GM10248 (cell line): ENCODE measurements at regions of chr16 and their contacts with region 1.

Region 1: GRCh38 chr16:53743149-53743566 is 39.2 kb downstream of the FTO start:
- DNase-seq: no peak
- CTCF ChIP-seq: peak; percentile 54

Region 2: DNA sequence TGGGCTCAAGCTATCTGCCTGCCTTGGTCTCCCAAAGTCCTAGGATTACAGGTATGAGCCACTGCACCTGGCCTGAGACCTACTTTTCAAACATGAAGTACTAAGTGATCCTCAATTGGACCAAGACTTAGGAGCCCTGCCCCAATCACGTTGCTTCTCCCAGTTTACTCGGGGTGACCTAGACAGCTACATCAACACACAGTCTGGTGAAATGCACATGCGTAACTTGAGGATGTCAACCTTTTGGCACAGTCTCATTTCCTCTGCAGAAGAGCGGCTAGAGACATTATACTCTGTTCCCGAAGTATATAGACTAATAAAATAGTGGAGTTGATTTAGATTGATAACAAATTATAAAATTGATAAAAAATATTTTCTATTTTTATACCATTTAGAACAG is 22.1 kb before region 1 on chr16:
- CTCF ChIA-PET with region 1: interaction called, 25 read pairs
- POLR2A ChIA-PET with region 1: no interaction called
- DNase-seq: no peak
- CTCF ChIP-seq: no peak

Region 3: GRCh38 chr16:53730693-53731092 is 12.5 kb before region 1 on chr16:
- CTCF ChIA-PET with region 1: interaction called, 25 read pairs
- POLR2A ChIA-PET with region 1: no interaction called
- DNase-seq: no peak
- CTCF ChIP-seq: no peak

Region 4: DNA sequence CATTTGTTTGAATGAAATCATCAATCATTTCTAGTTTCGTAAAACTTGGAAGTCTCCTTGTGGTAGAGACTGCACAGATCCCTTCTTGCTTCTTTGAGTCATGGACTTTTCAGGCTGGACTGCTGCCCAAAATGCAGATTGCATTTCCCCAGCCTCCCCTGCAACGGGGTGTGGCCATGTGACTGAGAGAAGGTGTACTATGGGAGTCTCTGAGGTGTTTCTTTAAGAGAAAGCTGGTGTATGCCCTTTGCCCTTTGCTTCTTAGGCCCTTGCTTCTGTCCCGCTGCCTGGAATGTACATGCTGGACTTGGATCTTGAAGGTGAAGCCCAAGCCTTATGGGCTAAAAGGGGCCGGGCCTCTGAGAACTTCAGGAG is 12.4 kb after region 1 on chr16:
- CTCF ChIA-PET with region 1: interaction called, 63 read pairs
- POLR2A ChIA-PET with region 1: no interaction called
- DNase-seq: no peak
- CTCF ChIP-seq: no peak

Region 5: DNA sequence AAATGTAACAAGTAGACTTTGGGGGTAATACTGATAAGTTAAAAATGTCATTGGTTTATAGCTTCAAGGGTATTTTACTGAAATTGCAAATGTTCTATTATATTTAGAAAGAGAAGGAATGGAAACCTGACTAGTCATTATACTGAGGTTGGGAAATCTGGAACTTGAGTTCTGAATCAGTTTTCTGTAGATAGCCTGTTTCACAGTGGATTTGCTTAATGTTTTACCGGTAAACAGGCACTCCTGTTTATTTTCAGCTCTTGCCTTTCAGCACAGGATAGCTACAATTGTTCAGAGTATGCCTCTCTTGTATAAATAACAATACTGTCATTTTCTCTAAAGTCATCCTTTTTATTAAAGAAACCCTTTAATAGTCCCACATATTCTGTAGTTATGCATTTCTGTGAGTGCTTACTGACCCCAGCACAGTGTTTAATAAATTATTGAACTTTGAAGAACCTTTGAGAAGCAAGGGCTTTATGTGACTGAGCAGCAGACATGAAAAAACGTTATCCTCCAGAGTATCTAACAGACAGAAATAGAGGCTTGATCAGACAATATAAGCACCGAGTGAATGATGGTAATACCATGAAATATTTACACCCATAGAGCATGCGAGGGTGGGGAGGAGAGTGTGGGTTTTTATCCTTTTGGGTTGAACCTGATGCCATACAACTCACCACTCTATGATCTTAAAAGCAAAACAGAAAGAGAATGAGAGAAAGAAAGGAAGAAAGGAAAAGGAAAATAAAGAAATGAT is 19.0 kb after region 1 on chr16:
- CTCF ChIA-PET with region 1: interaction called, 63 read pairs
- POLR2A ChIA-PET with region 1: no interaction called
- DNase-seq: no peak
- CTCF ChIP-seq: no peak

Region 6: GRCh38 chr16:53773150-53773846 is 30.1 kb after region 1 on chr16:
- CTCF ChIA-PET with region 1: interaction called, 14 read pairs
- POLR2A ChIA-PET with region 1: no interaction called
- DNase-seq: peak; percentile 29
- CTCF ChIP-seq: peak; percentile 63